Activated B cell treated with CpG ODN at 0.5 μM for 24 hours (primary cell): ENCODE measurements at regions of chr16 and their contacts with region 1.

Region 1: GRCh38 chr16:88633684-88634140 is 4.7 kb upstream of the IL17C start:
- DNase-seq: peak; percentile 64
- ATAC-seq: peak; percentile 54
- H3K4me3 Mint-ChIP-seq: peak overlapping the region; percentile 76
- H3K27ac Mint-ChIP-seq: peak overlapping the region; percentile 71
- H3K4me1 Mint-ChIP-seq: peaks cover 46% of the 10 kb centered on the region
- H3K27me3 Mint-ChIP-seq: no peaks in the 10 kb centered on the region
- CTCF ChIP-seq: no peak

Region 2: GRCh38 chr16:87387942-87388817 is 1245.5 kb before region 1 on chr16:
- CTCF ChIA-PET with region 1: no interaction called
- POLR2A ChIA-PET with region 1: no interaction called
- intact Hi-C with region 1: loop called (anchors 10 kb)
- DNase-seq: peak; percentile 59
- ATAC-seq: peak; percentile 62
- H3K4me3 Mint-ChIP-seq: peak overlapping the region; percentile 70
- H3K27ac Mint-ChIP-seq: peak overlapping the region; percentile 98
- H3K4me1 Mint-ChIP-seq: peaks cover 52% of the 10 kb centered on the region
- H3K27me3 Mint-ChIP-seq: peaks cover 2% of the 10 kb centered on the region
- CTCF ChIP-seq: no peak

Region 3: DNA sequence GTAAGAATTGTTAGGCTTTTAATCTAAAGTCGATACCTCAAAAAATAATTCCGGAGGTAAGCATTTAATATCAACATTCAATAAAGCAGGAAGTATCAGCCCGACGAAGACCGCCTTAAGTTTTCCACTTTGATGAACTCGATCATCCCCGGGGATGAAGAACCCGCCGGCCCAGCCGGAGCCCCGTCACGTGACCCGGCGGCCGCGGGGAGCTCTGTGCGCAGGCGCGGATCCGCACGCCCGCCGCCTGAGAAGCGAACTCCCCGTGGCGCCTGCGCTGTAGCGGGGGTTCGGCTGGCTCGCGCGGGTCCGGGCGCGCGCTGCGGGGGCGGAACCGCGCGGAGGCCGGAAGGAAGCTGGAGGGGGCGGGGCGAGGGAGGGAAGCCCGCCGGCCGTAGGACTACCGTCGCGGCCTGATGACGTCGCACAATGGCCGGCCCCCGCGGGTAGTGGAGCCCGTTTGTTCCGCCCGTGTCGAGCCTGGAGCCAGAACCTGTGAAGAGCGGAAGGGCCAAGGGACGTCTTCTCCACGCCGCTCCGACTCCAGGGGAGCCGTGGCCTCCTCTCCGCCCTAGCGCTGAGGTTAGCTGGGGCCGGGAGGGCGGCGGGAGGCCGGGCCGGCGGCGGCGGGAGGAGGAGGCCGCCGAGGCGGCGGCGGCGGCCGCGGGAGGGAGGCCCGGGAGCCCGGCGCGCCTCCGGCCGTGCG is 63.6 kb before region 1 on chr16 and contains the start of gene ZC3H18:
- CTCF ChIA-PET with region 1: no interaction called
- POLR2A ChIA-PET with region 1: interaction called, 8 read pairs
- intact Hi-C with region 1: loop called (anchors 1 kb)
- DNase-seq: peak; percentile 99
- ATAC-seq: peak; percentile 92
- H3K4me3 Mint-ChIP-seq: peak within 1 kb of the TSS; percentile 86
- H3K27ac Mint-ChIP-seq: peak within 1 kb of the TSS; percentile 76
- H3K4me1 Mint-ChIP-seq: peaks cover 25% of the 10 kb centered on the region
- H3K27me3 Mint-ChIP-seq: no peaks in the 10 kb centered on the region
- CTCF ChIP-seq: no peak
- total RNA-seq, gene ZC3H18: 61.7 and 74.2 TPM in 2 replicates

Region 4: DNA sequence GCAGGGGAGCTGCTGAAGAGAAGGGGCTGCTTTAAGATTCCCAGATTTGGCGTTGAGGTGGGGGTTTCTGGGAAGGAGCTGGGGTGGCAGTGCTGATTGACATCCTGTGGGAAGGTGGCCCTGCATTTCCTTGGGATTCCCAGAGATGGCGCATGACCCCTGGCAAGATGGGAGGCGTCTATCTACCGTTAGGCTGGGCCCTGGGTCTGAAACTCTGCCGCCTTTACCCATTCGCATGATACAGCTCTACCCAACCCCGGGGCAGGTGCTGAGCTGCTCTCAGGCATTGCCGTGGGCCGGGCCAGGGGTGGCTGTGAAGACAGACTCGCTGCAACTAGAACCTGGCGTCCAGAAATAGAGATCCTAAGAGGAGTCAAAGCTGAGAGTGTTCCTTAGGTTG is 39.1 kb after region 1 on chr16:
- CTCF ChIA-PET with region 1: no interaction called
- POLR2A ChIA-PET with region 1: no interaction called
- intact Hi-C with region 1: no loop called
- DNase-seq: no peak
- ATAC-seq: no peak
- H3K4me3 Mint-ChIP-seq: no peak overlapping the region
- H3K27ac Mint-ChIP-seq: no peak overlapping the region
- H3K4me1 Mint-ChIP-seq: no peaks in the 10 kb centered on the region
- H3K27me3 Mint-ChIP-seq: no peaks in the 10 kb centered on the region
- CTCF ChIP-seq: no peak

Region 5: GRCh38 chr16:88686439-88687253 is 52.9 kb after region 1 on chr16 and contains the start of gene SNAI3:
- CTCF ChIA-PET with region 1: interaction called, 6 read pairs
- POLR2A ChIA-PET with region 1: interaction called, 7 read pairs
- intact Hi-C with region 1: loop called (anchors 1 kb)
- DNase-seq: peak; percentile 94
- ATAC-seq: peak; percentile 74
- H3K4me3 Mint-ChIP-seq: peak within 1 kb of the TSS; percentile 83
- H3K27ac Mint-ChIP-seq: no peak within 1 kb of the TSS
- H3K4me1 Mint-ChIP-seq: peaks cover 46% of the 10 kb centered on the region
- H3K27me3 Mint-ChIP-seq: no peaks in the 10 kb centered on the region
- CTCF ChIP-seq: no peak
- total RNA-seq, gene SNAI3: 1.5 and 2.7 TPM in 2 replicates

Region 6: DNA sequence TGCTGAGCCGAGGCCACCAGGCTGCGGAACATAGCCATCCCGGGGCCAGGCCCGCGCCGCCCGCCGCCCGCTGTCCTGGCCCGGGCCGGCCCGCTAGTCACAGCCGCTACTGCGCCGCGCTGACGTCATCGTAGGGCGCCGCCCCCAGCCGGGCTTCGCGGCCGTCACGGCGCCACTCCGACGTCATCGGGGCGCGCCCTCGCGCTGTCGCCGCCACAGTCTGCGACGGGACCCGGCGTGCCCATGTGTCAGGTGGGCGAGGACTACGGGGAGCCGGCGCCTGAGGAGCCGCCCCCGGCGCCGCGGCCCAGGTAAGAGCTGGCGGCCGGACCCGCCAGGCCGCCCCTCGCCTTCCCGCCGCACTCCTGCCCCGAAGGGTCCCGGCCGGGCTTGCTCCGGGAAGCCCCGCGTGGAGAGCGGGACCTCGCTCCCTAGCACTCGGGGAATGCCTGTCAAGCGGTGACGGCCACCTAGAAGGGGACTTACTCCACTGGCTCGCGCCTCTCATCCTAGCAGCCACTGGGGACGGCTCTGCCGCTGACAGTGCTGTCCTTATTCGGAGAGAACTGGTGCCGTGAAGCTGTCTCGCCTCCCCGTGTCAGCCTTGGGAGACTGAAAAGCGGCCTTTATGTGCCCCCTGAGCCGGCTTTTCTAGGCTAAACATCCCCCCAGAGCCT is 72.7 kb after region 1 on chr16 and contains the starts of genes CTU2 and RNF166:
- CTCF ChIA-PET with region 1: no interaction called
- POLR2A ChIA-PET with region 1: interaction called, 5 read pairs
- intact Hi-C with region 1: loop called (anchors 1 kb)
- DNase-seq: peak; percentile 95
- ATAC-seq: peak; percentile 70
- H3K4me3 Mint-ChIP-seq: peak within 1 kb of the TSS; percentile 87
- H3K27ac Mint-ChIP-seq: peak within 1 kb of the TSS; percentile 85
- H3K4me1 Mint-ChIP-seq: peaks cover 51% of the 10 kb centered on the region
- H3K27me3 Mint-ChIP-seq: no peaks in the 10 kb centered on the region
- CTCF ChIP-seq: no peak
- total RNA-seq, gene CTU2: 28.8 and 36.7 TPM in 2 replicates
- total RNA-seq, gene RNF166: 31.0 and 45.3 TPM in 2 replicates